ENCODE measurements at regions of chrX and their contacts with region 1.

Region 1: GRCh38 chrX:150575416-150575808 is 7.0 kb downstream of the MTM1 start:
- DNase-seq: peak; percentile 96
- H3K4me3 ChIP-seq: no peak overlapping the region
- H3K27ac ChIP-seq: peak overlapping the region; percentile 78
- H3K4me1 ChIP-seq: peaks cover 47% of the 10 kb centered on the region
- H3K27me3 ChIP-seq: no peaks in the 10 kb centered on the region
- CTCF ChIP-seq: no peak

Region 2: GRCh38 chrX:150693775-150694574 is 118.6 kb after region 1 on chrX:
- CTCF ChIA-PET with region 1: no interaction called
- dilution Hi-C with region 1: no loop called
- in situ Hi-C with region 1: no loop called
- intact Hi-C with region 1: loop called (anchors 10 kb)
- DNase-seq: peak; percentile 95
- H3K4me3 ChIP-seq: peak overlapping the region; percentile 29 to 44 (median 42)
- H3K27ac ChIP-seq: peak overlapping the region; percentile 97
- H3K4me1 ChIP-seq: peaks cover 25% of the 10 kb centered on the region
- H3K27me3 ChIP-seq: no peaks in the 10 kb centered on the region
- CTCF ChIP-seq: no peak

Measured in mammary epithelial cell (primary cell).